Natural killer cell (primary cell): ENCODE measurements at regions of chr1 and their contacts with region 1.

Region 1: GRCh38 chr1:59976194-59977074 is 49.9 kb upstream of the CYP2J2 start:
- DNase-seq: peak; percentile 25 to 62
- ATAC-seq: peak in 1 of 3 donors; percentile 63
- H3K4me3 ChIP-seq: no peak overlapping the region
- H3K4me3 Mint-ChIP-seq: no peak overlapping the region
- H3K27ac ChIP-seq: no peak overlapping the region
- H3K27ac Mint-ChIP-seq: no peak overlapping the region
- H3K4me1 ChIP-seq: peaks cover 1% of the 10 kb centered on the region
- H3K4me1 Mint-ChIP-seq: peaks cover 0 to 6% of the 10 kb centered on the region in 2 donors
- H3K27me3 ChIP-seq: peaks cover 4% of the 10 kb centered on the region
- H3K27me3 Mint-ChIP-seq: peaks cover 14 to 15% of the 10 kb centered on the region in 2 donors
- CTCF ChIP-seq: peak; percentile 82

Region 2: DNA sequence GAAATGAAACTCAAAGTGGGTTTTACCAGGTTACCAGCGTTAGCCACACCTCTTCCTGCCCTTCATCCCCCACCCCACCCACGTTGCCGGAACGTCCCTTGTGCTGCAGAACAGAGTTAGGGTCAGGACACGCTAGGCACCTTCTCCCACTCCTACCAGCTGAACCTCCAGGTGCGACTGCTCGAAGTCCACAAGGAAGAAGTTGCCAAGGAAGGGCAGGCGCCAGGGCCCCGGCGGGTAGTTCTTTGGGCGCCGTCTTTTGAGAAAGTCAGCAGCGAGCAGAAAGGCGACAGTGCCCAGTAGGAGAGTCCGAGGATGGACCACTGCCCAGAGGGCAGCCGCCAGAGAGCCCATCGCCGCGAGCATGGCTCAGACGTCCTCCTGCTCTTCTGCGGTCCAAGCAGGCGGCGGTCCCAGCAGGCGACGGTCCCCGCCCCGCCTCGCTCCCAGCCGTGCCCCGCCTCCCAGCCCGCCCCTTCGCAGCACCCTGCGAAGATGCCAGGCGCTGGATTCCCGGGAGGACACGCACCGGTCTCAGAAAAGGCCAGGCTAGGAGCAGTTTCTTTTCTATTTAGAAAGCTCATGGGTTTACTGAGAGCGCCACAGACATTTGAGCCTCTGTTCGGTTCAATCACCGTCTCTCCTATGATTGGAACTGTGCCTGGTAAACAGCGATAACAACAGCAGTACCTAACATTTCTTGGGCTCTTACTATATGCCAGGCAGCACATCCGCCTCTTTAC is 49.9 kb before region 1 on chr1 and contains the start of gene CYP2J2:
- intact Hi-C with region 1: no loop called
- DNase-seq: peak; percentile 15 to 46
- ATAC-seq: peak; percentile 49 to 80 (median 63)
- H3K4me3 ChIP-seq: peak within 1 kb of the TSS; percentile 59
- H3K4me3 Mint-ChIP-seq: peak within 1 kb of the TSS; percentile 85
- H3K27ac ChIP-seq: no peak within 1 kb of the TSS
- H3K27ac Mint-ChIP-seq: peak within 1 kb of the TSS in 1 of 2 donors; percentile 5
- H3K4me1 ChIP-seq: peaks cover 11% of the 10 kb centered on the region
- H3K4me1 Mint-ChIP-seq: peaks cover 16 to 17% of the 10 kb centered on the region in 2 donors
- H3K27me3 ChIP-seq: peaks cover 5% of the 10 kb centered on the region
- H3K27me3 Mint-ChIP-seq: peaks cover 42 to 57% of the 10 kb centered on the region in 2 donors
- CTCF ChIP-seq: no peak
- total RNA-seq, gene CYP2J2: 0.20 to 0.21 TPM in 2 of 3 donors, not detected in the other

Region 3: GRCh38 chr1:59994302-59995198 is 18.1 kb after region 1 on chr1:
- intact Hi-C with region 1: no loop called
- DNase-seq: no peak
- ATAC-seq: no peak
- H3K4me3 ChIP-seq: no peak overlapping the region
- H3K4me3 Mint-ChIP-seq: no peak overlapping the region
- H3K27ac ChIP-seq: no peak overlapping the region
- H3K27ac Mint-ChIP-seq: no peak overlapping the region
- H3K4me1 ChIP-seq: no peaks in the 10 kb centered on the region
- H3K4me1 Mint-ChIP-seq: no peaks in the 10 kb centered on the region
- H3K27me3 ChIP-seq: no peaks in the 10 kb centered on the region
- H3K27me3 Mint-ChIP-seq: peaks cover 4 to 26% of the 10 kb centered on the region in 2 donors
- CTCF ChIP-seq: no peak

Region 4: GRCh38 chr1:61043010-61043820 is 1066.8 kb after region 1 on chr1:
- intact Hi-C with region 1: loop called (anchors 5 kb)
- DNase-seq: peak; percentile 77 to 87
- ATAC-seq: peak; percentile 93 to 97 (median 96)
- H3K4me3 ChIP-seq: peak overlapping the region; percentile 29
- H3K4me3 Mint-ChIP-seq: peak overlapping the region; percentile 69
- H3K27ac ChIP-seq: no peak overlapping the region
- H3K27ac Mint-ChIP-seq: no peak overlapping the region
- H3K4me1 ChIP-seq: peaks cover 9% of the 10 kb centered on the region
- H3K4me1 Mint-ChIP-seq: peaks cover 0 to 6% of the 10 kb centered on the region in 2 donors
- H3K27me3 ChIP-seq: peaks cover 10% of the 10 kb centered on the region
- H3K27me3 Mint-ChIP-seq: peaks cover 39 to 51% of the 10 kb centered on the region in 2 donors
- CTCF ChIP-seq: peak; percentile 82

Region 5: DNA sequence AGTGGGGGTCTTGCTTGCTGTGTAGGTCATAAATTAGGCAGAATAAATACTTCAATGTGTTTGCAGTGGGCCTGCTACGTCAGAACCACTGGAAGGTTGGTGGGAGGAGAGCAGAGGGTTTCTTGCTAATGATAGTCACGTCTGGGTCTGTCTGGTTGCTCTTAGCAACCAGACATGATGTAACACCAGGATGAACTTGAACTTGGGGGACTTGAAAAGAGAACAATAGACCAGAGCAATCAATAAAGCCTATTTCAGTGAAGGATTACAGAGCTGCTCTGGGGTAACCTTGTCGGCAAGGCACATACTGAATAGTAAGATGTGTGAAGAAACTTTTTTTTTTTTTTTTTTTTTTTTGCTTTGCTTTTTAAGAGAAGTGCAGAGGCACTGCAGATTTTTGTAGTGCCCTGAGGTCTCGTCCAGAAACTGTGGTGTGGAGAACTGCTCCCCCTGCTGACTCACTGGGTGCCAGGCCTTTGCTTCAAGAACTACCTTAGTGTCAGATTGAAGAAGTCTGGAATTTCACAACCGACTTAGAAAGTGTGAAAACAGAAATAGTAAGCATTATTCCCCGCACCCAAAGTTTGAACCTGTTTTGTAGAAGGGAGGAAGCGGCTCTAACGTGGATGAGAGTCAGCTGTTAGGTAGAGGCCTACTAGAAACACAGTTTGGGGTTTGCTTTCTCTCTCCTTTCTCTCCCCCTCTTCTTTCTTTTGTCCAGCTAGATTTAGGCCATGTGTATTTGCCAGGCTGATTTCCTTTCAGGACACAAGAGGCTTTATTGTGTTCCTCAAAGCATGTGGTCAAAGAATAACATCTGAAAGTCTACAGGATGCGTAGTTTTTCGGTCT is 1476.9 kb after region 1 on chr1:
- intact Hi-C with region 1: loop called (anchors 2 kb)
- DNase-seq: peak; percentile 53 to 82
- ATAC-seq: peak; percentile 81 to 84 (median 82)
- H3K4me3 ChIP-seq: no peak overlapping the region
- H3K4me3 Mint-ChIP-seq: no peak overlapping the region
- H3K27ac ChIP-seq: no peak overlapping the region
- H3K27ac Mint-ChIP-seq: peak overlapping the region; percentile 45 to 62
- H3K4me1 ChIP-seq: peaks cover 7% of the 10 kb centered on the region
- H3K4me1 Mint-ChIP-seq: peaks cover 27 to 34% of the 10 kb centered on the region in 2 donors
- H3K27me3 ChIP-seq: no peaks in the 10 kb centered on the region
- H3K27me3 Mint-ChIP-seq: peaks cover 0 to 24% of the 10 kb centered on the region in 2 donors
- CTCF ChIP-seq: peak; percentile 66

Region 6: DNA sequence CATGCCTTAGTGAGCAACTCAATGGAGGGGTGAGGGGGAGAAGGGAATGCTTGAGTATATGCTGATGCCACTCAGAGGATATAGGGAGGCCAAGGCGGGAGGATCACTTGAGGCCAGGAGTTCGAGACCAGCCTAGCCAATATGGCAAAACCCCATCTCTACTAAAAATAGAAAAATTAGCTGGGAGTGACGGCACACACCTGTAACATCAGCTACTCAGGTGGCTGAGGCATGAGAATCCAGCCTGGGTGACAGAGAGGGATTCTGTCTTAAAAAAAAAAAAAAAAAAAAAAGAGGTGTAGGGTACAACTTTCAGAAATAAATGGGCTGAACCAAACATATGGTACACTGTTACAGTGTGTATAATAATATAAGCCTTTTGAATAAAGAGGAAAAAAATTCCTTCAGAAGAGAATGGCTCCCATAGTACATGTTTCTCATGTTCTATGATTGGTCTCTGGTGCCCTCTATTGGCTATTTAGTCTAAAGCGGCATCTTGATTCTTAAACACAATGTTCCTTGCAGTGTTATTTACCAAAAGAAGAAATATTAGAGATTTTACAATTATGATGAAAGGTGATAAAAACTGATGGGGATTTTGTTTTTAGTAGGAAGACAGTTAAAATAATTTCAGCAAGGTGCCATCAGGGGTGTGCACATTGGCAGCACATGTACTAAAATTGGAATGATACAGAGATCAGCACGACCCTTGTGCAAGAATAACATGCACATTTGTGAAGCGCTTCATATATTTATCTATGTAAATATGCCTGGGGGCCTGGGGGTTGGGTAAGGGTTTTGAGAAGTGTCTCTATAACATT is 1875.6 kb after region 1 on chr1:
- intact Hi-C with region 1: loop called (anchors 2 kb)
- DNase-seq: peak in 1 of 2 donors; percentile 79
- ATAC-seq: peak; percentile 44 to 71 (median 53)
- H3K4me3 ChIP-seq: no peak overlapping the region
- H3K4me3 Mint-ChIP-seq: no peak overlapping the region
- H3K27ac ChIP-seq: no peak overlapping the region
- H3K27ac Mint-ChIP-seq: no peak overlapping the region
- H3K4me1 ChIP-seq: no peaks in the 10 kb centered on the region
- H3K4me1 Mint-ChIP-seq: no peaks in the 10 kb centered on the region
- H3K27me3 ChIP-seq: no peaks in the 10 kb centered on the region
- H3K27me3 Mint-ChIP-seq: no peaks in the 10 kb centered on the region
- CTCF ChIP-seq: peak; percentile 82